ENCODE measurements at regions of chr10 and their contacts with region 1.

Region 1: DNA sequence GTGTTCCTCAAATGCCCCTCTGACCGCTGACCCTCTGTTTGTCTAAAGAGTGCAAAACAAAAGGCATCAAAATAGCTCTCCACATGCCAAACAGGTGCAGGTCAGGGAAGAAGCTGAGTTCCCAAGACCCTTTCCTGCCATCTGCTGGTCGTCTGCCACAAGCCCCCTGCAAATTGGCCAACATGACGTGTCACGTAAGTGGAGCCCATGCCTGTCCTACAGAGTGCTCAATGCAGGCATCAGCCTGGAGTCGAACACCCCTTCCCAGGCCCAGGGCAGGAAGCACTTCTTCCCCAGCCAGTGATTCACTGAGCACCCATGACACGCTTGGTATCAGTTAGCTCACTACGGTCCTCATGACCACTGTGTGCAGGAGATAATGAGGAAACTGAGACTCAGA is 14.1 kb downstream of the TMEM72 start:
- DNase-seq: no peak
- H3K4me3 ChIP-seq: no peak overlapping the region
- H3K27ac ChIP-seq: no peak overlapping the region
- H3K27me3 ChIP-seq: no peaks in the 10 kb centered on the region
- CTCF ChIP-seq: peak in 13 of 56 donors; percentile 8 to 29 (median 11)

Region 2: GRCh38 chr10:44890696-44891563 is 34.3 kb before region 1 on chr10:
- intact Hi-C with region 1: loop called in 1 of 2 experiments (anchors 5 kb)
- DNase-seq: no peak
- H3K4me3 ChIP-seq: no peak overlapping the region
- H3K27ac ChIP-seq: no peak overlapping the region
- H3K27me3 ChIP-seq: no peaks in the 10 kb centered on the region
- CTCF ChIP-seq: no peak

Region 3: DNA sequence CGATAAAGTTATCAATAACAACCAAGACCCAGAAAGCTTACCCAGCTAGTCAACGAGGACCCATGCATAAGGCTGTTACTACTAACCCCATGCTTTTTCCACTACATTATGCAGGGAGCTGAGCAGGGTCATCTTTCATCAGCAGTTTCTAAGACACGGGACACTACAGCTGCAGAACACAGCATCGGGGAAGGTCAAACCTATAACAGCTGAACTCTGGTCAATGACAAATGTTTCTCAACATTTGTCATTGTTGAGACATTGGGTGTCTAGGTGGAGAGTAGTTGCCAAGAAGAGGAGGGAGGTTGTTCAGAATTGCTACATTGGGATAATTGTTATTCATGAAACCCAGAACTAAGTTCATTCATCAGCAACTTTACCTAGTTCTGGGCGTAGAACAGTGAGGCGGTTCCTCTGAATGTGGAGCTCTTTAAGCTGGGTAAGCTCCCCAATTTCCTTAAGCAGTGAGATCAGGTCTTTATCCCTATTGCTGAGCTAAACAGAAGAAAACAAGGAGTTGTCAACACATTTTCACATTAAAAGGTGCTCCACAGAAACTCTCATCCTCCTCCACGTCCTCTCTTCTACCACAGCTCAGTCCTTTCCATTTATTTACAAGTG is 181.1 kb after region 1 on chr10:
- intact Hi-C with region 1: no loop called
- DNase-seq: no peak
- H3K4me3 ChIP-seq: no peak overlapping the region
- H3K27ac ChIP-seq: no peak overlapping the region
- H3K27me3 ChIP-seq: peaks cover 0 to 19% (median 0%) of the 10 kb centered on the region in 45 donors
- CTCF ChIP-seq: no peak

Region 4: GRCh38 chr10:45370202-45370955 is 445.2 kb after region 1 on chr10:
- intact Hi-C with region 1: no loop called
- DNase-seq: no peak
- H3K4me3 ChIP-seq: no peak overlapping the region
- H3K27ac ChIP-seq: no peak overlapping the region
- H3K27me3 ChIP-seq: peaks cover 0 to 36% (median 21%) of the 10 kb centered on the region in 45 donors
- CTCF ChIP-seq: no peak

Measured in dorsolateral prefrontal cortex (tissue), 120 donors.